Common myeloid progenitor, CD34-positive (primary cell): ENCODE measurements at regions of chr1 and their contacts with region 1.

Region 1: GRCh38 chr1:21255278-21255942 is 34.9 kb downstream of the ECE1 start:
- DNase-seq: peak; percentile 83 to 90 (median 87)
- H3K4me3 ChIP-seq: no peak overlapping the region
- H3K27ac ChIP-seq: no peak overlapping the region
- H3K4me1 ChIP-seq: peaks cover 0 to 12% (median 9%) of the 10 kb centered on the region in 4 experiments
- H3K27me3 ChIP-seq: no peaks in the 10 kb centered on the region

Region 2: GRCh38 chr1:21232044-21232443 is 23.4 kb before region 1 on chr1:
- CTCF ChIA-PET with region 1: interaction called, 43 read pairs
- POLR2A ChIA-PET with region 1: interaction called, 3 read pairs
- DNase-seq: peak; percentile 36 to 60 (median 50)
- H3K4me3 ChIP-seq: no peak overlapping the region
- H3K27ac ChIP-seq: no peak overlapping the region
- H3K4me1 ChIP-seq: peaks cover 0 to 6% (median 3%) of the 10 kb centered on the region in 4 experiments
- H3K27me3 ChIP-seq: no peaks in the 10 kb centered on the region

Region 3: GRCh38 chr1:21270086-21270689 is 14.8 kb after region 1 on chr1:
- CTCF ChIA-PET with region 1: interaction called, 131 read pairs
- POLR2A ChIA-PET with region 1: no interaction called
- DNase-seq: peak; percentile 64 to 77 (median 71)
- H3K4me3 ChIP-seq: no peak overlapping the region
- H3K27ac ChIP-seq: no peak overlapping the region
- H3K4me1 ChIP-seq: no peaks in the 10 kb centered on the region
- H3K27me3 ChIP-seq: no peaks in the 10 kb centered on the region

Region 4: DNA sequence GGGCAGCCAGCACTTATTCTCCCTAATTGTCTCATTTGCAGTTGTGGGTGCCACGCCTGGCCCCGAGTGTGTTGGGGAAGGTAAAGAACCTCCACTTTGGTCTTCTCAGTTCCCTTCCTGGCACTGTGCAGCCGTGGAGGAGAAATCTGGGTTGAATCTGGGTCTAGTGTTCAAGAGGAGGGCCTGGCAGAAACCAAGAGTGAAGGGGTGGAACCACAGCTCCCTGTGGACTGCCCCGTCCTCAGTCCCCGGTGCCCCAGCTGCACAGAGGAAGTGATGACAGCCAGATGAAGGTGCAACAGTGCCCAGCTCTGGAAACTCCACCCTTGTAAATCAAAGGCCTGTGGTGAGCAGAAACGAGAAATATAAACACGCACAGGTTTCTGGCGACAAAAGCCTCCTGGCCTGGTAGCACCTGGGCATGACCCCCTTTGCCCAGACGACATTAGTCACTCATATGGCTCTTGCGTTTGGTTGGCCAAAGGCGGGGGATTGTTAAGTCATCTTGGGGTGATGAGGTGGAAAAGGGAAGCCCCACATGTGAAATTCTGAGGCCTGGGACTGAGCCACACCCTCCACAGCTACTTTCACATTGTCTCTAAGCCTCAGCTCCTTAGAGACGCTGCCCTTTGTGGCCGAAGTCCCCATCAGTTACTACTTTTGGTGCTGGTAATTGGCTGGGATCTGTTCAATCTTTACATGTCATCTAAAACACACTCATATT is 39.0 kb after region 1 on chr1:
- CTCF ChIA-PET with region 1: interaction called, 20 read pairs
- POLR2A ChIA-PET with region 1: no interaction called
- DNase-seq: peak; percentile 74 to 96 (median 95)
- H3K4me3 ChIP-seq: peak overlapping the region in 1 of 7 experiments; percentile 14
- H3K27ac ChIP-seq: peak overlapping the region in 1 of 2 experiments; percentile 43
- H3K4me1 ChIP-seq: peaks cover 16 to 43% (median 36%) of the 10 kb centered on the region in 4 experiments
- H3K27me3 ChIP-seq: peaks cover 0 to 10% (median 0%) of the 10 kb centered on the region in 5 experiments

Region 5: GRCh38 chr1:21324368-21325141 is 69.1 kb after region 1 on chr1:
- CTCF ChIA-PET with region 1: interaction called, 25 read pairs
- POLR2A ChIA-PET with region 1: no interaction called
- DNase-seq: peak; percentile 78 to 94 (median 91)
- H3K4me3 ChIP-seq: peak overlapping the region in 4 of 7 experiments; percentile 12 to 61 (median 40)
- H3K27ac ChIP-seq: peak overlapping the region; percentile 61 to 78
- H3K4me1 ChIP-seq: peaks cover 7 to 54% (median 47%) of the 10 kb centered on the region in 4 experiments
- H3K27me3 ChIP-seq: no peaks in the 10 kb centered on the region

Region 6: GRCh38 chr1:21567241-21568005 is 312.0 kb after region 1 on chr1:
- CTCF ChIA-PET with region 1: no interaction called
- POLR2A ChIA-PET with region 1: no interaction called
- DNase-seq: no peak
- H3K4me3 ChIP-seq: no peak overlapping the region
- H3K27ac ChIP-seq: no peak overlapping the region
- H3K4me1 ChIP-seq: no peaks in the 10 kb centered on the region
- H3K27me3 ChIP-seq: peaks cover 0 to 3% (median 0%) of the 10 kb centered on the region in 5 experiments